AG04449 (cell line): ENCODE measurements at regions of chr1 and their contacts with region 1.

Region 1: GRCh38 chr1:25487628-25488027 is 55.8 kb upstream of the LDLRAP1 start:
- DNase-seq: no peak
- H3K4me3 ChIP-seq: no peak overlapping the region
- CTCF ChIP-seq: no peak

Region 2: GRCh38 chr1:25476186-25477097 is 11.2 kb before region 1 on chr1:
- CTCF ChIA-PET with region 1: interaction called, 51 read pairs
- POLR2A ChIA-PET with region 1: no interaction called
- DNase-seq: no peak
- H3K4me3 ChIP-seq: no peak overlapping the region
- CTCF ChIP-seq: no peak

Region 3: GRCh38 chr1:25503551-25504426 is 16.2 kb after region 1 on chr1:
- CTCF ChIA-PET with region 1: interaction called, 28 read pairs
- POLR2A ChIA-PET with region 1: no interaction called
- DNase-seq: no peak
- H3K4me3 ChIP-seq: no peak overlapping the region
- CTCF ChIP-seq: peak; percentile 33